Activated CD4-positive, alpha-beta T cell treated with anti-CD3 and anti-CD28 coated beads, Interleukin-2, amount 10 ng/mL, durations not matched to agents 24 days and 14 days (primary cell): ENCODE measurements at regions of chr3 and their contacts with region 1.

Region 1: DNA sequence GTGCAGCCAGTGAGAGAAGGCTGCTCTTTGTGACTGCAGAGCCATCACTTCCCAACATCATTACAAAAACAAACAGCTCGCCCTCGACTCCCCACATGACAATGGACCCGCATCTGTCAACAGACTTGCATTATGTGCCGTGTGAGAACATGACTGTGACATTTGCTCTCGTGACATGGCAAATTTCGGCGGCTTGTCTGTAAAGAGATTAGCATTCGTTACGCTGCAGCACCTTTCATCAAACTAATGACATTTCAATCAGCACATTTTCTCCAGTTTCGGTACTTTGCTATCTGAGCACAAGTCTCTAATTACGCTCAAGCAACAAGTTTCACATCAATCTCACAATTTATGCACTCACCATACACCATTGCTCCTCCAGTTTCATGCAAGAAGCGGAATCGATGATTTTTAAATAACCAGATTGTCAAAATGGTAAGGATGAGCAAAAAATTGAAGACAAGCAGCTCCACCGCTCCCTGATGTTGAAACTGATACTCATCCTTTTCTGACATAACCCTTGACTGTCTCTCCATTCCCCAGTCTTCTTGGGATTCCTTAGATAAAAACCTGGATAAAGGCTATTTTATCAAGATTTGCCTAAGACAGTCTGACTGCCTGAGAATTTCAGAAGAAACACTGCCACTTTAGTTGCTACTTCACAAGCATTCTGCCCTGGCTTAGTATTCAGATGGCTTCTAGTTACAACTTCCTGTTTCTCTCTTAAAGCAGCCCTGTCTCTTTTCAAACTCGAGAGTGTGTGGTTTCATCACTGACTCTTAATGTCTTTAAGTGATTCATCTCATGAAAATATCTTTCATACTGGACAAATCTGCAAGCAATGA is at the start of gene SLC9A9:
- DNase-seq: peak; percentile 77
- H3K4me3 Mint-ChIP-seq: peak within 1 kb of the TSS; percentile 92
- H3K27ac Mint-ChIP-seq: peak within 1 kb of the TSS; percentile 87
- H3K4me1 Mint-ChIP-seq: peaks cover 46% of the 10 kb centered on the region
- H3K27me3 Mint-ChIP-seq: peaks cover 6% of the 10 kb centered on the region
- total RNA-seq, gene SLC9A9: 1.1 and 1.3 TPM in 2 replicates

Region 2: GRCh38 chr3:143775459-143775858 is 72.5 kb before region 1 on chr3:
- intact Hi-C with region 1: loop called (anchors 2 kb)
- DNase-seq: peak; percentile 68
- H3K4me3 Mint-ChIP-seq: no peak overlapping the region
- H3K27ac Mint-ChIP-seq: no peak overlapping the region
- H3K4me1 Mint-ChIP-seq: no peaks in the 10 kb centered on the region
- H3K27me3 Mint-ChIP-seq: peaks cover 2% of the 10 kb centered on the region

Region 3: GRCh38 chr3:143814443-143814889 is 33.5 kb before region 1 on chr3:
- intact Hi-C with region 1: loop called (anchors 2 kb)
- DNase-seq: peak; percentile 66
- H3K4me3 Mint-ChIP-seq: peak overlapping the region; percentile 38
- H3K27ac Mint-ChIP-seq: peak overlapping the region; percentile 51
- H3K4me1 Mint-ChIP-seq: peaks cover 14% of the 10 kb centered on the region
- H3K27me3 Mint-ChIP-seq: no peaks in the 10 kb centered on the region

Region 4: GRCh38 chr3:143859465-143860203 is 11.6 kb after region 1 on chr3:
- intact Hi-C with region 1: no loop called
- DNase-seq: no peak
- H3K4me3 Mint-ChIP-seq: no peak overlapping the region
- H3K27ac Mint-ChIP-seq: no peak overlapping the region
- H3K4me1 Mint-ChIP-seq: peaks cover 9% of the 10 kb centered on the region
- H3K27me3 Mint-ChIP-seq: peaks cover 35% of the 10 kb centered on the region

Region 5: GRCh38 chr3:143977341-143978262 is 129.6 kb after region 1 on chr3:
- intact Hi-C with region 1: no loop called
- DNase-seq: no peak
- H3K4me3 Mint-ChIP-seq: no peak overlapping the region
- H3K27ac Mint-ChIP-seq: no peak overlapping the region
- H3K4me1 Mint-ChIP-seq: peaks cover 37% of the 10 kb centered on the region
- H3K27me3 Mint-ChIP-seq: no peaks in the 10 kb centered on the region

Region 6: GRCh38 chr3:144323783-144324478 is 475.9 kb after region 1 on chr3:
- intact Hi-C with region 1: no loop called
- DNase-seq: no peak
- H3K4me3 Mint-ChIP-seq: no peak overlapping the region
- H3K27ac Mint-ChIP-seq: no peak overlapping the region
- H3K4me1 Mint-ChIP-seq: no peaks in the 10 kb centered on the region
- H3K27me3 Mint-ChIP-seq: no peaks in the 10 kb centered on the region